ENCODE measurements at regions of chr5 and their contacts with region 1.

Region 1: GRCh38 chr5:16552666-16553343 is 64.0 kb downstream of the RETREG1 start:
- DNase-seq: peak; percentile 44 to 84
- H3K4me3 ChIP-seq: no peak overlapping the region
- H3K27ac ChIP-seq: no peak overlapping the region
- H3K4me1 ChIP-seq: no peaks in the 10 kb centered on the region
- H3K27me3 ChIP-seq: no peaks in the 10 kb centered on the region
- CTCF ChIP-seq: peak; percentile 80 to 90 (median 89)
- EP300 ChIP-seq: no peak
- POLR2A ChIP-seq: no peak
- RAD21 ChIP-seq: peak; percentile 66 to 78

Region 2: DNA sequence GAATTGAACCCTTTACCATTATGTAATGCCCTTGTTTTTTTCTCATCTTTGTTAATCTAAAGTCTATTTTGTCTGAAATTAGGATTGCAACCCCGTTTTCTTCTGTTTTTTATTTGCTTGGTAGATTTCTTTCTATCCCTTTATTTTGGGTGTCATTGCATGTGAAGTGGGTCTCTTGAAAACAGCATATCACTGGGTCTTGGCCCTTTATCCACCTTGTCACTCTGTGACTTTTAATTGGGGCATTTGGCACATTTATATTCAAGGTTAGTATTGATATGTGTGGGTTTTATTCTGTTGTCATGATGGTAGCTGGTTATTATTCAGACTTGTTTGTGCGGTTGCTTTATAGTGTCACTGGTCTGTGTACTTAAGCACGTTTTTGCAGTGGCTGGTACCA is 255.9 kb before region 1 on chr5:
- CTCF ChIA-PET with region 1: no interaction called
- POLR2A ChIA-PET with region 1: no interaction called
- DNase-seq: no peak
- H3K4me3 ChIP-seq: no peak overlapping the region
- H3K27ac ChIP-seq: no peak overlapping the region
- H3K4me1 ChIP-seq: no peaks in the 10 kb centered on the region
- H3K27me3 ChIP-seq: no peaks in the 10 kb centered on the region
- CTCF ChIP-seq: no peak
- EP300 ChIP-seq: no peak
- POLR2A ChIP-seq: no peak
- RAD21 ChIP-seq: no peak

Region 3: GRCh38 chr5:16539169-16539721 is 13.6 kb before region 1 on chr5:
- CTCF ChIA-PET with region 1: interaction called, 72 read pairs
- POLR2A ChIA-PET with region 1: no interaction called
- DNase-seq: no peak
- H3K4me3 ChIP-seq: no peak overlapping the region
- H3K27ac ChIP-seq: no peak overlapping the region
- H3K4me1 ChIP-seq: no peaks in the 10 kb centered on the region
- H3K27me3 ChIP-seq: no peaks in the 10 kb centered on the region
- CTCF ChIP-seq: no peak
- EP300 ChIP-seq: no peak
- POLR2A ChIP-seq: no peak
- RAD21 ChIP-seq: no peak

Region 4: DNA sequence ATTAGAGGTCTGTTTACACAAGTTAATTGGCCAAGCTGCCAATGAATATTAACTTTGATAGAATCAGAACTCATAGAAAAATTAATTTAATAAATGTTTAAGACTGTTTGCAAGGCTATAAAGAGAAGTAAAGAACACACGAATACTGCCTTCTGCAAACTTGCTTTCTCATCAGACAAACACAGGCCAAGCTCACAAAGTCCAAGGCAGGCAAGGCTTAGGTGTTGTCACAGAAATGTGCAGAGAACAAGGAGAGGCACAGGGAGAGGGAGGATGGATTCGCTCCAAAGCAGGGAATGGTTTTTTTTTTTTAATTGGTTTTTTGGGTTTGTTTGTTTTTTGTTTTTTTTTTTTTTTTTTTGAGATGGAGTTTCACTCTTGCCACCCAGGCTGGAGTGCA is 20.6 kb after region 1 on chr5:
- CTCF ChIA-PET with region 1: interaction called, 25 read pairs
- POLR2A ChIA-PET with region 1: interaction called, 3 read pairs
- DNase-seq: no peak
- H3K4me3 ChIP-seq: no peak overlapping the region
- H3K27ac ChIP-seq: no peak overlapping the region
- H3K4me1 ChIP-seq: peaks cover 1 to 18% (median 10%) of the 10 kb centered on the region in 4 experiments
- H3K27me3 ChIP-seq: no peaks in the 10 kb centered on the region; a peak in 1 of 7 replicates
- CTCF ChIP-seq: no peak
- EP300 ChIP-seq: no peak
- POLR2A ChIP-seq: no peak
- RAD21 ChIP-seq: no peak

Region 5: DNA sequence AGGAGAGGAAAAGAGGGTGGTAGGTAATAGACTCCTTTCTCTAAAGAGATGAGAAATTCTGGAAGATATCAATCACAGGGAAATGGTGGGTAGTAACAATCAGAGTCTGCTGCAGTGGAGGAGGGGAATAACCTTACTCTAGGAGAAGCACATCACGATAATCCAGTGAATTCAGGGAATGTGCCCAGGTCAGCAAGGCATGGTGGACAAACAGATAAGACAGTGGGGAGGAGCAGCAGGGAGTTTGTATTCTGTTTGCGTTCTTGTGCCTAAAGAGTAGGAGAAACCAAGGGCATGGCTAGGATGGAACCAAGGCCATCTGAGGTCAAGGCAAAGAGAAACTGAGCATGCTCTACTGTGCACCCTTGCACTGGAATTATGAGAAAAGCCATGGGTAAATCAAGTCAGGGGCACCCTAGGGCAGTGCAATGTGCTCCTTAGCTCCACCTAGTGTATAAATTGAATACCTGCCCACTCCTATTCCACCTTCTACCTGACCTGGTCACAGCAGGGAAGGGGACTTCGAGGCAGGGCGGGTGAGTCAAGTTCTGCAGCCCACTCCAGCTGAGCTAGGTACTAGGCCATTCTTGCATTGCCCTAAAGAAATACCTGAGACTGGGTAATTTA is 32.3 kb after region 1 on chr5:
- CTCF ChIA-PET with region 1: interaction called, 25 read pairs
- POLR2A ChIA-PET with region 1: no interaction called
- DNase-seq: no peak
- H3K4me3 ChIP-seq: no peak overlapping the region
- H3K27ac ChIP-seq: no peak overlapping the region
- H3K4me1 ChIP-seq: no peaks in the 10 kb centered on the region; a peak in 2 of 7 replicates
- H3K27me3 ChIP-seq: no peaks in the 10 kb centered on the region
- CTCF ChIP-seq: peak; percentile 12 to 63 (median 29); a peak in 3 of 4 replicates
- EP300 ChIP-seq: no peak
- POLR2A ChIP-seq: no peak
- RAD21 ChIP-seq: peak in 1 of 2 experiments; percentile 27; a peak in 2 of 4 replicates

Measured in H1 (cell line).